Lower leg skin (tissue), 4 donors: ENCODE measurements at regions of chr6 and their contacts with region 1.

Region 1: DNA sequence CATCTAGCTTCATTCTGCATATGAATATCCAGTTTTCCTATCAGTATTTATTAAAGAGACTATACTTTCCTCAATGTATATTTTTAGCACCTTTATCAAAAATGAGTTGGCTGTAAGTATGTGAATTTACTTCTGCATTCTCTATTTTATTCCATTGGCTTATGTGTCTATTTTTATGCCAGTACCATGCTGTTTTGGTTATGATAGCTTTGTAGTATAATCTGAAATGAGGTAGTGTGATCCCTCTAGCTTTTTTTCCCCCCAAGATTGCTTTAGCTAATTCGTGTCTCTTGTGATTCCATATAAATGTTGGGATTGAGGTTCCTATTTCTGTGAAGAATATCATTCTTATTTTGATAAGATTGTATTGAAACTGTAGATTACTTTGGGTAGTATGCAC is 469.1 kb upstream of the MAP3K7 start:
- DNase-seq: no peak
- H3K4me3 ChIP-seq: no peak overlapping the region
- CTCF ChIP-seq: no peak
- POLR2A ChIP-seq: no peak

Region 2: DNA sequence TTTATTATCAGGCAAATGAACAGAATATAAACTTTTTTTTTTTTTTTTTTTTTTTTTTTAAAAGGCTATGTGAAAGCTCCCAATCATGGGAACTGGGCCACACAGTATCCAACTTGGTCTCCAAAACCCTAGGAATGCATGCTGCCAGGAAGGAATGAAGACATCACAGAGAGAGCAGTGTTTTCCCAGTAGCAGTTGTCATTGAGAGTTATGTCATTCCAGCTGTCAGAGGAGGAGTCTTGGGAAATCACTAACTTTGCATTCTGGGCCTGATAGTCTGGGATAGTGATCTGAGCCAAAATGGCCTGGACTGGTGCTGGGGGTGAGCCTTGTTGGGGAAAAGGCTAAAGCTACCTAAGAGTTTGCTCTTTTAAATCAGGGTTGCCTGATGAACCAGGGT is 237.8 kb before region 1 on chr6:
- intact Hi-C with region 1: no loop called
- DNase-seq: no peak
- H3K4me3 ChIP-seq: no peak overlapping the region
- CTCF ChIP-seq: no peak
- POLR2A ChIP-seq: no peak

Region 3: DNA sequence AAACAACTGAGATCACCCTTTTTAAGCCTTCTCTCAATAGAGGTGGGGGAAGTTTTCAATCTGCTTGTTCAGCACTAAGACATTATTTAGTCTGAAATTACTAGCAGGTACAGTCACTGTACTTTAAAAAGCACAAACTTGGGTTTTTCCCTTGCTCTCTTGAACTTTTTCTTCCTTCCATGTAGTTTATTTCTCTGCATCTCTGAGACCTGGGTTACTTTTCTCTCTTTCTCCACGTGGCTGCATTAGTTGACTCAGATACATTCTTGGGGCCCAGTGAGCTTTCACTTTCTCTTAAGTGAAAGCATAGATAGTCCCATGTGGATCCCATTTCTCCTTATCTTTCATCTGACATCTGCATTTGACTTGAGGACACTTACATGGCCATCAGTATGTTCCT is 35.2 kb before region 1 on chr6:
- intact Hi-C with region 1: loop called (anchors 1 kb)
- DNase-seq: no peak
- H3K4me3 ChIP-seq: no peak overlapping the region
- CTCF ChIP-seq: no peak
- POLR2A ChIP-seq: no peak

Region 4: GRCh38 chr6:91167837-91168236 is 111.9 kb after region 1 on chr6:
- intact Hi-C with region 1: no loop called
- DNase-seq: no peak
- H3K4me3 ChIP-seq: no peak overlapping the region
- CTCF ChIP-seq: no peak
- POLR2A ChIP-seq: no peak

Region 5: DNA sequence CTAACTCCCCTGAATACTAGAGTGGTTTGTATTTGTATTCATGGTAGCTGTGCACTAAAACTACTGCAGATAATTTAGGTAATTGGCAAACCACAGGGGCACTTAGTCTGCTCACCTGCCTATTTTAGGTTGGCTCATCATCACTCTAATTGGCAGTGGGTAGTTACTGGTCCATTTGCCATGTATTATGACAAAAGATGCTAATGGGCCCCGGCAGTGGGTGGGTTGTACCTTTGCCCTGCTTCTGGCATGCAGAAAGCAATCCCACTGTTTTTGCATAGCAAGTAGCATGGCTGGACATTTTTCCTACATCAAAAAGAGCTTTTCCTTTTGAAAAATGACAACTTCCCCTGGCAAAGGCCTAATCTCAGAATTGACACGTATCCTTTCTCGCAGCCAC is 272.3 kb after region 1 on chr6:
- intact Hi-C with region 1: no loop called
- DNase-seq: no peak
- H3K4me3 ChIP-seq: no peak overlapping the region
- CTCF ChIP-seq: no peak
- POLR2A ChIP-seq: no peak

Region 6: DNA sequence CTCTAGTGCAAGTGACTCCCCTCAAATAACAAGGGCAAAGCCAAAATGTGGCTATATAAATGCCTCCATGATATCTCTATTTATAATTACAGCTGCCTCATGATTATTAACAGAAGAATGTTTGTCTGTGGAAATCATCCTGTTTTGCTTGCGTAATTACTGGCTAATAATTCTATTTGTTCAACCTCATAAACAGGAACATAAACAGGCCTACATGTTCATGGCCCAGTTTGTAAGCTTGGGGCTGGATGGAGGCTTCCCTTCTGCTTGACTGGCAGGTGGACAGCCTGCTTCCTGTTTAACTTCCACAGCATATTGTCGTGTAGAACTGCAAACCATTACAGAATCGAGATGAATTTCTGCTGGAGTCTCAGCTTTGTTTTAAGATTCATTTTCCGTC is 296.9 kb after region 1 on chr6:
- intact Hi-C with region 1: no loop called
- DNase-seq: no peak
- H3K4me3 ChIP-seq: no peak overlapping the region
- CTCF ChIP-seq: no peak
- POLR2A ChIP-seq: no peak